Activated CD4-positive, alpha-beta T cell treated with anti-CD3 and anti-CD28 coated beads, Interleukin-2, amount 10 ng/mL, durations not matched to agents 24 days and 14 days (primary cell): ENCODE measurements at regions of chr15 and their contacts with region 1.

Region 1: DNA sequence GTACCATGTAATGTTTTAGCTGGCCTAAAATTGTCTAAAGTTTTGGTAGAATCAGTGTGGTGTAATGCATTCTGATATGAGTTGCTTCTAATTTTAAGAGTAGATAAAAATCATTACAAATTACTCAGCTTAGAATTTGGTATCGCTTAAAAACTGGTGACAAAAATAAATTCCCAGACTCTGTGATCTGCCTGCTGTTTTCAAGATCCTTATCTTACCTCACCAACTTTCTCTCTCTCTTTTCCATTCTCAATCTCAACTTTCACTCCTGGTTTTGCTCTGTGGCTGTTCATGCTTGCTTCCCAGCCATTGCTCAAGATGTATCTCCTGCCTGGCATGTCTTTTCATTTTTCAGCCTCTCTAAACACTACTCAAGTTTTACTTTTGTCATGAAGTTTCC is 45.7 kb downstream of the TCF12 start:
- DNase-seq: no peak
- H3K4me3 Mint-ChIP-seq: peak overlapping the region; percentile 2
- H3K27ac Mint-ChIP-seq: peak overlapping the region; percentile 20
- H3K4me1 Mint-ChIP-seq: peaks cover 25% of the 10 kb centered on the region
- H3K27me3 Mint-ChIP-seq: no peaks in the 10 kb centered on the region

Region 2: GRCh38 chr15:56672721-56673120 is 291.5 kb before region 1 on chr15:
- intact Hi-C with region 1: no loop called
- DNase-seq: no peak
- H3K4me3 Mint-ChIP-seq: no peak overlapping the region
- H3K27ac Mint-ChIP-seq: no peak overlapping the region
- H3K4me1 Mint-ChIP-seq: no peaks in the 10 kb centered on the region
- H3K27me3 Mint-ChIP-seq: no peaks in the 10 kb centered on the region

Region 3: GRCh38 chr15:56765251-56765650 is 198.9 kb before region 1 on chr15:
- intact Hi-C with region 1: loop called (anchors 10 kb)
- DNase-seq: peak; percentile 74
- H3K4me3 Mint-ChIP-seq: peak overlapping the region; percentile 41
- H3K27ac Mint-ChIP-seq: peak overlapping the region; percentile 93
- H3K4me1 Mint-ChIP-seq: peaks cover 32% of the 10 kb centered on the region
- H3K27me3 Mint-ChIP-seq: no peaks in the 10 kb centered on the region

Region 4: GRCh38 chr15:56984681-56985481 is 20.7 kb after region 1 on chr15:
- intact Hi-C with region 1: loop called (anchors 1 kb)
- DNase-seq: no peak
- H3K4me3 Mint-ChIP-seq: no peak overlapping the region
- H3K27ac Mint-ChIP-seq: no peak overlapping the region
- H3K4me1 Mint-ChIP-seq: peaks cover 24% of the 10 kb centered on the region
- H3K27me3 Mint-ChIP-seq: no peaks in the 10 kb centered on the region